AG04450 (cell line): ENCODE measurements at regions of chr14 and their contacts with region 1.

Region 1: DNA sequence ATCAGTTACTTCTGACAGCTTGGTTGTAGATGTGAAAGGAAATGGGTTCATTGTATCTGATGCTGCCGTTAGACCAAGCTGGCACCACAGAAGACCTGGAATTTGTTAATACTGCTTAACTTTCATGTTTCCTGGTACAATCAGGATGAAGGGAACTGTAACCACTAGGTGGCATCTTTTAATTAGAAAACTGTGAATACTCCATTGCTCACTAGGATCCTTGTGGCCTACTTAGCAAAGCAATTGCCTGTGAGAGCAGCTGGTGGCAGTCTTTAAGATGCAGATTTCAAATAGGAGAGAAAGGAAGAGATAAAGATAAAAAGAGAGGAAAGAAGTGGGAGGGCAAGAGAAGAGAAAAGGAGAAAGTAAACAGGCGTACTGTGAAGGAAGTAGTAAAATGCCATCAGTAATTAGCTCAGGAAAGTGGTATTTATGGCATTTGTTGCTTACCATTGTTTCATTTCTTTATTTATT is 114.5 kb downstream of the RAD51B start:
- DNase-seq: peak; percentile 55
- H3K4me3 ChIP-seq: no peak overlapping the region
- H3K27ac ChIP-seq: no peak overlapping the region
- H3K27me3 ChIP-seq: no peaks in the 10 kb centered on the region
- CTCF ChIP-seq: peak; percentile 75

Region 2: DNA sequence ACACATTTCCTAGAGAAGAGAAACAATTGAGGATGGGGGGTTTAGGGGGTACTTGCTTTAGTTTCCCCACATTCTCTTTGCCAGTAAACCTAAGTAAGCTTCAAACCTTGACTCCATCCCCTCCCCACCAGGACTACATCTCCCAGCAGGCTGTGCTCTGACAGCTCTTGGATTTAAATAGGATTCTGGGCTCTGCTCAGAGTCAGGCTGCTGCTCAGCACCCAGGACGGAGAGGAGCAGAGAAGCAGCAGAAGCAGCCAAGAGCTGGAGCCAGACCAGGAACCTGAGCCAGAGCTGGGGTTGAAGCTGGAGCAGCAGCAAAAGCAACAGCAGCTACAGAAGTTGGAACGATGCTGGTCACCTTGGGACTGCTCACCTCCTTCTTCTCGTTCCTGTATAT is 211.8 kb before region 1 on chr14:
- CTCF ChIA-PET with region 1: no interaction called
- POLR2A ChIA-PET with region 1: no interaction called
- DNase-seq: no peak
- H3K4me3 ChIP-seq: no peak overlapping the region
- H3K27ac ChIP-seq: no peak overlapping the region
- H3K27me3 ChIP-seq: peaks cover 50% of the 10 kb centered on the region
- CTCF ChIP-seq: no peak

Region 3: DNA sequence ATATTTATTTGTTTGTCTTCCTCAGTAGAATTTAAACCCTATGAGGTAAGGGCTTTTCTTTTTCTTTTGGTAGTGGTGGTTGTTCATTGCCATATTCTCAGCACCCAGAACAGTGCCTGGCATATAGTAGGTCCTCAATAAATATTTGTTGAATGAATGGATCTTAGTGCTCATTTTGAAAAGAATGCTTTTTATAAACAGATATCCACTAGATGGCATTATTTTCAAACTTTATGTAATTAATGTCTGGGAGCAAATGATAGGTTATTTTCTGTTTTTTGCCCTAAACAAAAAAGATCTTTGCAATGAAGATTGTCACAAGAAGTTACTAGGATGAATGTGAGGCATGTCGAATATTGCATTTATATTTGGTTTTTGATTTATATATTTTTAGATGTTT is 50.3 kb before region 1 on chr14:
- CTCF ChIA-PET with region 1: interaction called, 10 read pairs
- POLR2A ChIA-PET with region 1: no interaction called
- DNase-seq: no peak
- H3K4me3 ChIP-seq: no peak overlapping the region
- H3K27ac ChIP-seq: no peak overlapping the region
- H3K27me3 ChIP-seq: no peaks in the 10 kb centered on the region
- CTCF ChIP-seq: peak; percentile 28

Region 4: GRCh38 chr14:67919259-67920032 is 14.6 kb before region 1 on chr14:
- CTCF ChIA-PET with region 1: interaction called, 15 read pairs
- POLR2A ChIA-PET with region 1: no interaction called
- DNase-seq: no peak
- H3K4me3 ChIP-seq: no peak overlapping the region
- H3K27ac ChIP-seq: no peak overlapping the region
- H3K27me3 ChIP-seq: no peaks in the 10 kb centered on the region
- CTCF ChIP-seq: no peak

Region 5: DNA sequence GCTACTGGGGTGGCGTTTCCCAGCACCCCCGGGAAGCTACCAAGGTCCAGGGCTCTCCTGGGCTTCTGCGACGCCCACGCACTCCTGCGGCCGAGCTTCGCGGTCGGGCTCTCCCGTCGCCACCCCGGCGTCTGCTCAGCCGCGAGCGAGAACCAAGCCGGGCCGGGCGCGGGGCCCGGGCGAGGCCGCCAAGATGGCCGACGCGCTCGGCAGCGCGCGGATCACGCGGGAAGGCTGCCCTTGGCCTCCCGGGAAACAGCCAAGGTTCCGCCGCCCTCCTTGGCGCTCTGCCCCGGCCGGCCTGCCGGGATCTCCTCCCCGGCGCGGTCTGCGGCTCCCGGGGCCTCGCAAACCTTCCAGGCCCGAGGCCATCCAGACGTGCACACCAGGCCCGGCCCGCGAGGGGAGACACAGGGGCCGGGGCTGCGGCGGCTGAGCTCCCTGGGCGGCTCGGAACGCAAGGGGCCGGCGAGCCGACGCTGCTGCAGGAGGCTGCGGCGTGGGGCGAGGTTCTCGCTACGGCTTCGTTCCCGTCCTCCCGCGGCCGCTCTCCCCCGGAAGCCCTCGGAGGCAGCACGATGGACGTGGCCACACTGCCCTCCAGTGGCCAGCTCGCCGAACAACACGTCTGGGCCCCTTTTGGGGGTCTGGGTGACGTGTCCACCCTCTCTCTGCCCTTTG is 882.4 kb after region 1 on chr14:
- CTCF ChIA-PET with region 1: interaction called, 23 read pairs
- POLR2A ChIA-PET with region 1: no interaction called
- DNase-seq: peak; percentile 79
- H3K4me3 ChIP-seq: peak overlapping the region; percentile 46
- H3K27ac ChIP-seq: peak overlapping the region; percentile 95
- H3K27me3 ChIP-seq: no peaks in the 10 kb centered on the region
- CTCF ChIP-seq: peak; percentile 94

Region 6: DNA sequence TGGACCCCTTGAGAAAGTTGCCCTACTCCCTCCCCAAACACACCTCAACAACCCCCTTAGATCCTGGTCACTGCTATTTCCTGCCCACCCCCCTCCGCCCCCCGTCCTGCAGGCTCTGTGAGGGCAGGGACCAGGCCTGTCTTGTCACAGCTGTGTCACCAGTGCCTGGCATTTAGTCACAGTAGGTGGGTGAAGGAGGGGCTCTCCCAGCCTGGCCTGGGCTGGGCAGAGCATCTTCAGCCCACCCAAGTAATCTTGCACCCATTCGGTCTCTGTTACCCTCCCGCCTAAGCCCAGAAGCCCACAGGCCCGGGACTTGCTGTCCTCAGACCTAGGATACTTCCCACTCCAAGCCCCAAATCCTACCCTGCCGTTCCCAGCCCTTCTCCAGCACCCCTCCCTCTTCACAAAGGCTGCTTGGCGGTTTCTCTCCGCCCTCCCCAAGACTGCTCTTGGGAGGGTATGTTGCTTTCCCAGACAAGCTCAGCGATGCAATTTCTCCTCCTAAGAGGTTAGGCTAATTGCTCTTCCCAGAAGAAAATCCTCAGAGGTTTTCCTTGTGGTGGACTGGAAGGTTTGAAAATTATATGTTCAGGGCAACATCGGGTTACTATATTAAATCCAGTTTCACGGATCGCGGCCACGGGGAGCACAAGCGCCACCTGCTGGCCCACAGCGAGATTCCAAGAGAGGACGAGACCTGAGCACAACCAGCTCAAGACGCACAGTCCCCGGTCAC is 909.6 kb after region 1 on chr14:
- CTCF ChIA-PET with region 1: interaction called, 16 read pairs
- POLR2A ChIA-PET with region 1: interaction called, 3 read pairs
- DNase-seq: peak; percentile 34
- H3K4me3 ChIP-seq: no peak overlapping the region
- H3K27ac ChIP-seq: no peak overlapping the region
- H3K27me3 ChIP-seq: no peaks in the 10 kb centered on the region
- CTCF ChIP-seq: peak; percentile 93